Naive thymus-derived CD4-positive, alpha-beta T cell (primary cell): ENCODE measurements at regions of chr9 and their contacts with region 1.

Region 1: DNA sequence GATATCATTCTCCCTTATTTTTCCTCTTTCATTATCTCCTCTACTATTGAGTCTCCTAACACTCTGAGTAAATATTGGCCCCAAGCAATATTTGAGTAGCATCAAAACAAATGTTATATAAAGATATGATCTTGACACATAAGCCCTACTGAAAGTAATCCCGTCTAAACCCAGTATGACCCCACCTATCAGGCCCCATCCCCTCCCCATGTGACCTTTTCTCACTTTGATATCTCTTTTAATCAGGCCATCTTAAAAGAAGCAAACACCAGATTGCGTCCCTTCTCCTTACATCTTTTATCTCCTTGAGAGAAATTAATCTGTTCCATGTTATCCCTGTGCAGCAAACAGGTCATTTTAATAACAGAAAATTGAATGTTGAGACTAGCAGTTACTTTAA is 931.4 kb downstream of the PTPRD start:
- DNase-seq: no peak
- ATAC-seq: no peak
- H3K4me3 ChIP-seq: no peak overlapping the region
- H3K4me3 Mint-ChIP-seq: no peak overlapping the region
- H3K27ac ChIP-seq: no peak overlapping the region
- H3K27ac Mint-ChIP-seq: no peak overlapping the region
- H3K4me1 ChIP-seq: no peaks in the 10 kb centered on the region
- H3K4me1 Mint-ChIP-seq: no peaks in the 10 kb centered on the region
- H3K27me3 ChIP-seq: no peaks in the 10 kb centered on the region
- H3K27me3 Mint-ChIP-seq: no peaks in the 10 kb centered on the region

Region 2: GRCh38 chr9:8062459-8062858 is 1618.9 kb before region 1 on chr9:
- CTCF ChIA-PET with region 1: no interaction called
- POLR2A ChIA-PET with region 1: no interaction called
- intact Hi-C with region 1: loop called in 1 of 2 experiments (anchors 5 kb)
- DNase-seq: no peak
- ATAC-seq: no peak
- H3K4me3 ChIP-seq: no peak overlapping the region
- H3K4me3 Mint-ChIP-seq: no peak overlapping the region
- H3K27ac ChIP-seq: no peak overlapping the region
- H3K27ac Mint-ChIP-seq: no peak overlapping the region
- H3K4me1 ChIP-seq: no peaks in the 10 kb centered on the region
- H3K4me1 Mint-ChIP-seq: peaks cover 0 to 13% (median 3%) of the 10 kb centered on the region in 7 donors
- H3K27me3 ChIP-seq: no peaks in the 10 kb centered on the region
- H3K27me3 Mint-ChIP-seq: peaks cover 0 to 14% (median 0%) of the 10 kb centered on the region in 5 donors

Region 3: DNA sequence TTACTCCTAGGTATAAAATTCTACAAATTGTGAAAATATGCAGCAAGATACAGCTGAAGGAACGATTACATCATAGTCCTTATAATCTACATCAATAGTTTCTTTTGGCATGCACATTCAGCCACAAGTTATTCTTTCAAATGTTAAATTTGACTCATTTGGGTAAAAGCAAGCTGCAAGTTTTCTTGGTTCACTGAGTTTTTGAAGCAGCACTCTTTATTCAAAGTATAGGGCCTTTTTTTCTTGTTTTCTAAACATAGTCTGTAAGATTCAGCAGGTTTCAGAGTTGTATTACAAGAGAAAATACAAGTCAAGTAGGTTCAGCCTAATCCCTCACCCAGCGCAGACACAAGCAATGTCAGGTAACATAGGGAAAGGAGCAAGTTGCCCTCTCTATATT is 50.1 kb before region 1 on chr9:
- CTCF ChIA-PET with region 1: no interaction called
- POLR2A ChIA-PET with region 1: no interaction called
- intact Hi-C with region 1: no loop called
- DNase-seq: no peak
- ATAC-seq: no peak
- H3K4me3 ChIP-seq: no peak overlapping the region
- H3K4me3 Mint-ChIP-seq: no peak overlapping the region
- H3K27ac ChIP-seq: no peak overlapping the region
- H3K27ac Mint-ChIP-seq: no peak overlapping the region
- H3K4me1 ChIP-seq: no peaks in the 10 kb centered on the region
- H3K4me1 Mint-ChIP-seq: no peaks in the 10 kb centered on the region
- H3K27me3 ChIP-seq: no peaks in the 10 kb centered on the region
- H3K27me3 Mint-ChIP-seq: no peaks in the 10 kb centered on the region

Region 4: GRCh38 chr9:9719373-9720112 is 38.2 kb after region 1 on chr9:
- CTCF ChIA-PET with region 1: no interaction called
- POLR2A ChIA-PET with region 1: no interaction called
- intact Hi-C with region 1: no loop called
- DNase-seq: no peak
- ATAC-seq: no peak
- H3K4me3 ChIP-seq: no peak overlapping the region
- H3K4me3 Mint-ChIP-seq: no peak overlapping the region
- H3K27ac ChIP-seq: no peak overlapping the region
- H3K27ac Mint-ChIP-seq: no peak overlapping the region
- H3K4me1 ChIP-seq: no peaks in the 10 kb centered on the region
- H3K4me1 Mint-ChIP-seq: no peaks in the 10 kb centered on the region
- H3K27me3 ChIP-seq: no peaks in the 10 kb centered on the region
- H3K27me3 Mint-ChIP-seq: no peaks in the 10 kb centered on the region